ENCODE measurements at regions of chr20 and their contacts with region 1.

Region 1: GRCh38 chr20:48295445-48295963 is 510.2 kb upstream of the SULF2 start:
- DNase-seq: peak in 1 of 2 donors; percentile 33
- ATAC-seq: peak in 7 of 8 donors; percentile 67 to 85 (median 82)
- H3K4me3 ChIP-seq: no peak overlapping the region
- H3K27ac ChIP-seq: peak overlapping the region in 5 of 10 donors; percentile 22 to 62 (median 41)
- H3K4me1 ChIP-seq: peaks cover 0 to 33% (median 15%) of the 10 kb centered on the region in 9 donors
- H3K27me3 ChIP-seq: no peaks in the 10 kb centered on the region
- CTCF ChIP-seq: peak in 5 of 9 donors; percentile 20 to 55 (median 32)

Region 2: DNA sequence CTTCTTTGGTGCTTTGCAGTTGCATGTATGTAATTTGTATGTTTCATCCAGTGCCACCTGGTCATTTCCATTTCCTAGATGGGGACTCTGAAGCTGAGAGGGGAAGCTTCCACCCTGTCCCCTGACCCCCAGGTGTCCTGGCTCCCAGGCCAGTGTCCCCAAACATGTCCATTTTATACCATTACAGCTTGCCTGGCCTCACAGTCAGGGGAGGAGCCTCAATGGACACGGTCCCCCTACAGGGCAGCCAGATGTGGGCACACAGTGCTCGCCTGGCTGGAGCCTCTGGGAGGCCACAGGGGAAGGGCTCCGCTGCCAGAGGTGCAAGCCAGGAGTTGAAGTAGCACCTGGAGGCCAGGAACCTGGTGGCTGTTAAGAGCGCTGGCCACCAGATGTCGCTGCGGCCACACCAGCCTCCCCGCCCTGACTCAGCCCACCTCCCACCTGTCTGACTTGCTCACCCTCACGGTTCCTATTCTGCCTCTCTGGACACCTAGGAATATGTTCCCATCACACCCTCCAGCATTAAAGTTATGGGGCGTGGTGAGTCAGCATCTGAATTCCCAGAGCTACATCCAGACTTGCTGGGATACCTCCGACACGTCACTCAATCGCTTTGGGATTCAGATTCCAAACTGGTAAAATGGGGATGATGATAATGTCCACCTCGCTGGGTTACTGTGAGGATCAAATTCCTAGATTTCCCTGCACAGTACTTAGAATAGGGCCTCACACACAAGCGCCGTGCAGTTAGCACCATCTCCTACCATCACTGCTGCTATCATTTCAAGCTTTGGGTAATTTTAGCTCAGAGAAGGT is 617.7 kb before region 1 on chr20:
- intact Hi-C with region 1: loop called in 1 of 10 experiments (anchors 10 kb)
- DNase-seq: peak; percentile 28 to 52
- ATAC-seq: peak in 3 of 8 donors; percentile 30 to 53 (median 40)
- H3K4me3 ChIP-seq: no peak overlapping the region
- H3K27ac ChIP-seq: no peak overlapping the region
- H3K4me1 ChIP-seq: peaks cover 9 to 32% (median 17%) of the 10 kb centered on the region in 9 donors
- H3K27me3 ChIP-seq: no peaks in the 10 kb centered on the region
- CTCF ChIP-seq: peak; percentile 42 to 80 (median 78)

Region 3: GRCh38 chr20:47725248-47725973 is 570.1 kb before region 1 on chr20:
- intact Hi-C with region 1: loop called in 2 of 10 experiments (anchors 10 kb)
- DNase-seq: peak; percentile 41 to 76
- ATAC-seq: peak; percentile 29 to 80 (median 69)
- H3K4me3 ChIP-seq: no peak overlapping the region
- H3K27ac ChIP-seq: no peak overlapping the region
- H3K4me1 ChIP-seq: peaks cover 0 to 40% (median 5%) of the 10 kb centered on the region in 9 donors
- H3K27me3 ChIP-seq: no peaks in the 10 kb centered on the region
- CTCF ChIP-seq: peak; percentile 77 to 92 (median 87)